Sigmoid colon (tissue), 7 donors: ENCODE measurements at regions of chr4 and their contacts with region 1.

Region 1: GRCh38 chr4:99949034-99949998 is 759 bp downstream of the H2AZ1 start:
- DNase-seq: peak; percentile 95
- H3K4me3 ChIP-seq: peak overlapping the region; percentile 63 to 76 (median 71)
- H3K27ac ChIP-seq: peak overlapping the region; percentile 92 to 97 (median 96)
- H3K4me1 ChIP-seq: peaks cover 0 to 43% (median 37%) of the 10 kb centered on the region in 4 donors
- H3K27me3 ChIP-seq: no peaks in the 10 kb centered on the region
- CTCF ChIP-seq: peak; percentile 83 to 92 (median 83)
- EP300 ChIP-seq: no peak
- POLR2A ChIP-seq: peak in 1 of 2 donors; percentile 10

Region 2: DNA sequence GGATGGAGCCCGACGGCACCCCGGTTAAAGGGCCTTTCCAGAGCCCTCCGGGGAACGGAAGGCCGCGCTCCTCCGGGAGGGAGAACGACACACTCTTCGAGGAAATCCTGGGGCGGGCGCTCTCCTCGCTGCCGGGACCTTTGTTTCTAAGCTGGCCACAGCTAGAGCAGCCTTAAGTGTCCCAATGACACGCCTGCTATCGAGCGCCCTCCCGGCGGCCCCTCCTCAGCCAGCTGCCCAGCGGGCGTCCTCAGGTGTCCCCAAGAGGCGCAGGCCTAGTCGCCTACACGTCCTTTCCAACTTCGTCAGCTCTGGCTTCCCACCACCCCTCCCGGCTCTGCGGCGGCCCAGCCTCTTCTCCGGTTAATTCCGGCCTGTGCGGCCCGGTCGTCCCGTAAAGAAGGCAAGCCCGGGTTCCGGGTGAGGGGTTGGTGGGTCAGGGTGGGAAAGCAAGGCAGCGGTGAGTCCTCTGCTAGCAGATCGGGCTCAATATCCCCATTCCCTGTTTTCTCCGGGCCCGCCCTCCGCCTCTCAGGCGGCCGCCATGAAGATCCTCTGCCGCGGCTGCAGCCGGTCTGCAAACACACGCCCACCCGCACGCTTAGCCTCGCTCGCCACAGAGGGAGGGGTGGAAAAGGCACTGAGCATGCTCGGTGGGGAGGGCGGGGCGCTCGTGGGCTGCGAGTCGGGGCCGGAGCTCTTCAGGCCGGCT is 1688.6 kb before region 1 on chr4:
- intact Hi-C with region 1: loop called (anchors 5 kb)
- DNase-seq: peak; percentile 97
- H3K4me3 ChIP-seq: peak overlapping the region; percentile 68 to 97 (median 85)
- H3K27ac ChIP-seq: peak overlapping the region; percentile 97 to 98 (median 98)
- H3K4me1 ChIP-seq: peaks cover 0 to 36% (median 25%) of the 10 kb centered on the region in 4 donors
- H3K27me3 ChIP-seq: no peaks in the 10 kb centered on the region
- CTCF ChIP-seq: no peak
- EP300 ChIP-seq: no peak
- POLR2A ChIP-seq: peak; percentile 92 to 93

Region 3: DNA sequence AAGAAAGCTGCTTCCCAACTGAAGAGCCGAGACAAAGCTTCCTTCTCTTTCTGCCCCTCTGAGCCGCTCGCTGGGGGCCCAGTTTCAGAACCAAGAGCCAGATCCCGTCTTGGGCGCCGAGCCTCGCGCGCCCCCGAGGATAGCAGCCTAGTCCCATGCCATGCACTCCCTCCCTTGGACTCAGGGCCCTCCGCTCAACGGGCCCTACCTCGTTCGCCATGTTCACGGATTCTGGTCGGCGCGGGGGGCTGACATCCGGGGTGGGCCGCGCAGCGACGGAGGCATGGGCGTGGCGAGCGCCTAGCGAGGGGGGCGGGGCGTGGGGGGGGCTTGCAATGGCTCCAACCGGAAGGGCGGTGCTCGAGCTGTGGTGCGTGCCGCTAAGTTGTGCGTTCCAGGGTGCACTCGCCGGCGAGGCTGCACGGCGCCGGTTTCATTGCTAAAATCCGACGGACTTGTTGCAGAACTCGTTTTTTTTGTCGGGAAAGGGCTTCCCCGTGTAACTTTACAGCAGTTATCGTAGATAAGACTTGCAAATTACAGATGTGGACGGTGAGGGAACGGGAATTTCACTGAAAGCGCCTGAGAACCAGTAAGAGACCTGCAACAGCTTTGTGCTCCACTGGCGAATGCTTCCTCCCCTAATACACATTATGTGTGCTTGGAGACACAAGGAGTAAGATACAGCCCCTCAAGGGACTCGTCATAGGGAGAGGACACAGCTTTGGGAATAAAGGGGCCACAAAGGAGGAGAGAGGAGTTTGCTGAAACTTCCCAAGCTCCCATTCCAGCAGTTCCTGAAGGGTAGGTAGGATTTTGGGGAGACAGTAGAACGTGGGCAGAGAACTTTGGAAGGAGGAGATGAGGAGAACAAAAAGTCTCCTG is 860.6 kb before region 1 on chr4 and contains the start of gene ADH5:
- intact Hi-C with region 1: loop called (anchors 2 kb)
- DNase-seq: peak; percentile 96
- H3K4me3 ChIP-seq: peak within 1 kb of the TSS; percentile 73 to 89 (median 84)
- H3K27ac ChIP-seq: peak within 1 kb of the TSS; percentile 91 to 98 (median 97)
- H3K4me1 ChIP-seq: peaks cover 0 to 50% (median 38%) of the 10 kb centered on the region in 4 donors
- H3K27me3 ChIP-seq: no peaks in the 10 kb centered on the region
- CTCF ChIP-seq: no peak
- EP300 ChIP-seq: no peak
- POLR2A ChIP-seq: peak; percentile 94 to 97
- total RNA-seq, gene ADH5: 235 to 349 (median 263) TPM

Region 4: DNA sequence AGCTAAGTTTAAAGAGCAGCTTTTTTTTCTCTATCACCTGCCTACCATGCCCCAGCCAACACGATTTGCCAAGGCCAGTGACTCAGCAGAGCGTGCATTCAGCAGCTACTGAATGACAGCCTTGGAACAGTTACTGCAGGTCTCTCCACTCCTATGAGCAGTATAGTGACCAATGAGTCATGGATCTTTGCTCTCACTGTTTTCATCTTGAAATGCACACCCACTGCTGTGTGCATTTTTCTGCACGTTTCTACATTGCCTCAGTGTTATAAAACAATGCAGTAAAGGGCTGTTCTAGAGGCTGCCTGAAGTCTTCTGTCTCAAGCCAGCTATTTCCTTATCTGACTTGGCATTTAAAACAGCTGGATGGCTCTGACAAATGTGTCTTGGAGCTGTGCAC is 225.7 kb before region 1 on chr4:
- intact Hi-C with region 1: loop called (anchors 10 kb)
- DNase-seq: peak; percentile 88
- H3K4me3 ChIP-seq: no peak overlapping the region
- H3K27ac ChIP-seq: peak overlapping the region; percentile 77 to 87 (median 78)
- H3K4me1 ChIP-seq: peaks cover 0 to 53% (median 43%) of the 10 kb centered on the region in 4 donors
- H3K27me3 ChIP-seq: no peaks in the 10 kb centered on the region
- CTCF ChIP-seq: no peak
- EP300 ChIP-seq: peak; percentile 51 to 91 (median 66)
- POLR2A ChIP-seq: no peak

Region 5: DNA sequence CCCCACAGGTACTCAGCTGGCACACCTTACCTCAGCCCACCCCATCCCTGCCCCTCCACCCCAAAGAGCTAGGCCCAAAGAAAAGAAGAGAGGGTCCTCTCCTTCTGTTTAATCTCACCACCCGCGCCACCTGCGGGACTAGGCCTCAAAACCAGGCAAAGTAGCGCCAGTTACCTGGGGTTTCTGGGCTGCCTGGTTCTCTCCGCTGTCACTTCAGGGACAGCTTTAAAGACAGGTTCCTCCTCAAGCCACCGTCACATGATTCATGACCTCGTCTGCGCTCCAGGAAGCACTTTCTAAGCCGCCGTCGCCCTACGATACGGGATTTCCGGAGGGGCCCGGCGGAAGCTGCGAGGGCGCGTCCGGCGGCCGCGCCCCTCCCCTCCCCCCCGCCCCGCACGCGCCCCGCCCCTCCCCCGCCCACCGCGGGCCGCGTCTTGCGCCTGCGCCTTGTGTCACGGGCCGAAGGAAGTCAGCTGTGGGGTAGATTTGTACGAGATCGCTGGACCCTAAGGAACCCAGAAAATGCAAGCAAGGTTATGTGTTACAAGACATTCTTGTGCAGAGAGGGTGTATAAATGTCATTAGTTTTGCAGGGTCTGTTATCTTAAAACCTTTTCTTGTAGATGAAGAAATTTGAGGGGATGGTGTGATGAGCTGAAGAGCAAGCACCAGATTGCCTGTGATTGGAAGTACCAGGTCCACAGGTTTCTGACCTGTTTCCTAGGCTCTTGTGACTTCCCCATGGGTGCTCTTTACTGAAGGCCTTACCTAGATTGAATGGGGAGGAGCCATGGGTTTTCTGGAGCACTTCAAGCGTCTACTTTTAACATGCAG is 54.9 kb before region 1 on chr4 and contains the start of gene LAMTOR3:
- intact Hi-C with region 1: loop called (anchors 2 kb)
- DNase-seq: peak; percentile 96
- H3K4me3 ChIP-seq: peak within 1 kb of the TSS; percentile 73 to 89 (median 84)
- H3K27ac ChIP-seq: peak within 1 kb of the TSS; percentile 86 to 89 (median 88)
- H3K4me1 ChIP-seq: peaks cover 0 to 47% (median 25%) of the 10 kb centered on the region in 4 donors
- H3K27me3 ChIP-seq: no peaks in the 10 kb centered on the region
- CTCF ChIP-seq: no peak
- EP300 ChIP-seq: no peak
- POLR2A ChIP-seq: peak in 1 of 2 donors; percentile 6
- total RNA-seq, gene LAMTOR3: 36.6 to 77.2 (median 62.2) TPM

Region 6: DNA sequence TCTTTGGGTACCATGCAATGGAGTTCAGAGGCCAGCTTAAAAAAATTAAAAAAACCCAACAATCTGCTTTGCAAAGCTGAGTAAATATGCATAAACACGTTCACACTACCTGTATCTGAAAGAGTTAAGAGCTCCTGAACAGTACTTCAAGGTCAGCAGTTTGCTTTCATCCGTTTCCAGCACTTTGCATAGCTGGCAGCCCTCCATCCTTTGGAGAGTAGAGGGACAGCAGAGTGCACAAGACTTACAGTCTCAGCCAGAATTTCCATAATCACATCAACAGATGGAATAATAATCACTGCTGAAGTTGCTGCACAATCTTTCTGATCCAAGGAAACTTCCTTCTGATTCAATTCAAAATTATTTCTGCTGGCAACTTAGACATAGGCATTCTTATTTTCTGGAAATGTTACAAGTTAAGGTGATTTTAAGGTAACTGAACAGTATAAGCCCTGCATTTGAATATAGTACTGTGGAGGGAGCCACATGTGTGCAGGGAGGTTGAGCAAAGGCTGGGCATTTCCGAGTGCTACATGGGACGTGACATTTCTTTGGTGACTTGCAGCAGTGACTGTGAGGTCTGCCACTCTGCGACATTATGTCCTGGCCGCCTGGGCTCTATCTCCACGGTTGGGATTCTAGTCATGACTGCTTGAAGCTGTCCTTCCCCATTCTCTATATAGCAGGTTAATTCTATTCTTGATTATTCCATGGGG is 642.0 kb after region 1 on chr4:
- intact Hi-C with region 1: no loop called
- DNase-seq: peak; percentile 72
- H3K4me3 ChIP-seq: no peak overlapping the region
- H3K27ac ChIP-seq: no peak overlapping the region
- H3K4me1 ChIP-seq: peaks cover 0 to 31% (median 12%) of the 10 kb centered on the region in 4 donors
- H3K27me3 ChIP-seq: no peaks in the 10 kb centered on the region
- CTCF ChIP-seq: no peak
- EP300 ChIP-seq: no peak
- POLR2A ChIP-seq: no peak

Region 7: DNA sequence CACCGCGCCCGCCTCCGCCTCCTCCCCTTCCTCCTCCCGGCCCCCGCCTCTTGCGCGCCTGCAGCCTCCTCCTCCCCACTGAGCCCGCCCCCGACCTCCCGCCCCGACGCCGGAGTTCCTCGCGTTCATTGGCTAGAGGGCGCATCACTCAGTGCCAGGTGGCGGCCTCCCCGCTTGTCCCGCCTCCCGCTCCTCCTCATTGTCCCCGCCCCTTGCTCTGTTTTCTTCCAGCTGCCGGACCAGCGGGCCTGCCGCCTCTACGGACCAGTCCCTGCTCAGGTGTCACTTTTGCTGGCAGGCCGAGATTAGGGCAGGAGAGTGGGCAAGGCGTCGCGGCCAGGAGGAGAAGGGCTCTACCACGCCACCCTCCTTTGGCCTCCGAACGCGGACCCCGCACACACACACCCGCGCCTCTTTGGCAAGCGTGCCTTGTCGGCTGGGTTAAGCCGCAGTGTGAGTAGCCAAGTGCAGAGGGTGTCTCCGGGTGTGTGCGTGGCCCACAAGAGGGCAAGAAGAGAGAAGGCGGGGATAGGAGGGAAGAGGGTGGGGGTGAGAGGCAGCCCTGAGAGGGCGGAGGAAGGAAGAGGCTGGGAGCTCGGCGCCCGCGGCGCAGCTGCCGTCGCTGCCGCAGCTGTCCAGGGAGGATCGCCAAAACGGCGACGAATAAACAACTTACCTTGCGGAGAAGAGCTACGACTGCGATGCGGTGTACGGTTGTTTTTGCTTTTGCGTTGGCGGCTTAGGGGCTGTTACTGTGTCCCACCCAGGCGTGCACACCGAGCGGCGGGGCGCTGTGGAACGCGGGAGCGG is 1398.4 kb after region 1 on chr4:
- intact Hi-C with region 1: loop called (anchors 10 kb)
- DNase-seq: peak; percentile 100
- H3K4me3 ChIP-seq: peak overlapping the region; percentile 86 to 95 (median 92)
- H3K27ac ChIP-seq: peak overlapping the region; percentile 92 to 97 (median 96)
- H3K4me1 ChIP-seq: peaks cover 0 to 39% (median 24%) of the 10 kb centered on the region in 4 donors
- H3K27me3 ChIP-seq: no peaks in the 10 kb centered on the region
- CTCF ChIP-seq: peak in 3 of 4 experiments; percentile 10 to 16 (median 14)
- EP300 ChIP-seq: no peak
- POLR2A ChIP-seq: peak; percentile 42 to 71